Prostate gland (tissue), 2 donors: ENCODE measurements at regions of chr5 and their contacts with region 1.

Region 1: GRCh38 chr5:109063223-109063622 is 315.5 kb downstream of the FER start:
- DNase-seq: no peak
- H3K4me3 ChIP-seq: no peak overlapping the region
- H3K27ac ChIP-seq: no peak overlapping the region
- H3K4me1 ChIP-seq: no peaks in the 10 kb centered on the region
- H3K27me3 ChIP-seq: no peaks in the 10 kb centered on the region
- CTCF ChIP-seq: no peak
- POLR2A ChIP-seq: no peak

Region 2: DNA sequence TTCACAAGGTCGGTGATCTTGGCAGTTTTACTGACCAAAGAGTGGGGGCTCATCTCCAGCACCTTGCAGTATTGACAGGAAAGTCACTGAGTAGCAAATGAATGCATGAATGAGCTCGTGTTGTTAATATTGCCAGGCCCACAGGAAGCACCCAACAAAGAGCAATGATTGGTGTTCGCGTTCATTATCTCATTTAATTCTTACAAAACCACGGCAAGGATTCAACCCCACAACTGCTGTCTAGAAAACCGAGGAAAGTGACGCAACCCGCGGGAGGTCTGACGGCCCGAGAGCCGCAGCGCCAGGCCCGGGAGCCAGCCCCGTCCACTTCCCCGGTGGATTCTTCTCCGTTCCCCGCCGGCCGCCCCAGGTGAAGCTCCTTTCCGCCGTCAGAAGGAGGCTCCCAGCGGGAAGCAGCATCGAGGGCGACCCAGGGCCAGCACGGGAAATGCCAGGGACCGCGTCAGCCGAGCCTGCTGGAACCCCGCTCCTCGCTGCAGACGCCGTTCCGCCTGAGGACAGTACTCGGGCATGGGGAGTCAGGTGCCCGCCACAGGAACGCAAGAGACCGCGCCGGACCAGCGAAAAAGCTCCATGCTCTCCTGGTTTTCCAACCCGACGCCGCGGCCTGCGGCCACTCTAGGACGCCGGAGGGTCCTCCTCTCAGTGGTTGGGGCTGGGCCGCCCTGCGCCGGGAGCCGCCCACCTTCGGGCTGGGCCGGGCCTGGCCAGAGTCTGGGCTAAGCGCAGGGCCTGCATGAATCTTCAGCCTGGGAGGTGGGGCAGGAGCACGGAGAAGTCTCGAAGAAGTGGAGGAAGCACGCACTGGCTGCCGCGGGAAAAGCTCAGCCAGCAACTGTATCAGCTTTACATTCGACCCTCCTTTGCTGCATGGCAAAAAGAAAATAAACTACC is 335.3 kb before region 1 on chr5:
- intact Hi-C with region 1: loop called (anchors 10 kb)
- DNase-seq: peak; percentile 89
- H3K4me3 ChIP-seq: peak overlapping the region; percentile 61 to 64
- H3K27ac ChIP-seq: peak overlapping the region; percentile 86
- H3K4me1 ChIP-seq: no peaks in the 10 kb centered on the region
- H3K27me3 ChIP-seq: no peaks in the 10 kb centered on the region
- CTCF ChIP-seq: peak in 1 of 4 experiments; percentile 11
- POLR2A ChIP-seq: peak; percentile 79

Region 3: DNA sequence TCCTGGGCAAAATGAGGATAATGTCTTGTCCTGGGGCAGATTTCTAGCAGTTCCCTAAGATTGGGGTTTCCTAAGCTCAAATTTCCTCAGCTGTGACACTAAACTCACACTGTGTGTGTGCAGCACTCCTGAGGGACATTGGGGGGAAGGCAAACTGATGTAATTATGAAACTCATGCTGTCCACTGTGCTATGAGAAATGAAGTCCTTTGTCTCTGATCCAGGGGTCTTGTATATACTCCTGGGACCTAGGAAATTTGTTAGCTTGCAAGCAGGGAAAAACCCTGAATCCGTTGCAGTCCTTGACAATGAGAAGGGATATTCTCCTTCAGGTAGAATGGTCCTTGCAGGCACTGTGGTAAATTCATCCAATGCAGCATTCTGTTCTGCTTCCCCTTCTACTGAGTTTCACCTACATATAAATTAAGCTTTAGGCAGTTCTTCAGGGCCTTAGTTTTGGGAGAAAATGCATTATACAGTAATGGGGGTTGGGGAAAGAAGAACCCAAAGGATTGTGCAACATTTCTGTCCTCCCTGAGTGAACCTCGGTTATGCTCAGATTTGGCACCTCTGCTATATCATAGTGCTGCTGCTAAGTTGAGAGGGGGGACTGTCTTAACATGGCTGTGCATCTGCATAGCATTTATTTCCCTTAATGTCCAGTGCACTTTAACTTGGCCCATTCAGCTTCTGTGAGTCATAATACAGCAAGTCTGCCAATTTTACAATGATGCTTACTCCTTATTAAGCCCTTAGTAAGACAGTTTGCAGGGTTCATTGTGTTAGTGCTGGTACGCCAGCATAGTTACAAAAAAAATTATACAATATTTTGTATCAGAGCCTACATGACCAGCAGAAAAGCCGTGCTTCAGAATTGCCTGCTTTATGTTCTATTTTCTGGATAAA is 266.4 kb after region 1 on chr5:
- intact Hi-C with region 1: loop called (anchors 10 kb)
- DNase-seq: no peak
- H3K4me3 ChIP-seq: no peak overlapping the region
- H3K27ac ChIP-seq: no peak overlapping the region
- H3K4me1 ChIP-seq: no peaks in the 10 kb centered on the region
- H3K27me3 ChIP-seq: no peaks in the 10 kb centered on the region
- CTCF ChIP-seq: no peak
- POLR2A ChIP-seq: no peak